CD8-positive, alpha-beta T cell (primary cell): ENCODE measurements at regions of chr19 and their contacts with region 1.

Region 1: DNA sequence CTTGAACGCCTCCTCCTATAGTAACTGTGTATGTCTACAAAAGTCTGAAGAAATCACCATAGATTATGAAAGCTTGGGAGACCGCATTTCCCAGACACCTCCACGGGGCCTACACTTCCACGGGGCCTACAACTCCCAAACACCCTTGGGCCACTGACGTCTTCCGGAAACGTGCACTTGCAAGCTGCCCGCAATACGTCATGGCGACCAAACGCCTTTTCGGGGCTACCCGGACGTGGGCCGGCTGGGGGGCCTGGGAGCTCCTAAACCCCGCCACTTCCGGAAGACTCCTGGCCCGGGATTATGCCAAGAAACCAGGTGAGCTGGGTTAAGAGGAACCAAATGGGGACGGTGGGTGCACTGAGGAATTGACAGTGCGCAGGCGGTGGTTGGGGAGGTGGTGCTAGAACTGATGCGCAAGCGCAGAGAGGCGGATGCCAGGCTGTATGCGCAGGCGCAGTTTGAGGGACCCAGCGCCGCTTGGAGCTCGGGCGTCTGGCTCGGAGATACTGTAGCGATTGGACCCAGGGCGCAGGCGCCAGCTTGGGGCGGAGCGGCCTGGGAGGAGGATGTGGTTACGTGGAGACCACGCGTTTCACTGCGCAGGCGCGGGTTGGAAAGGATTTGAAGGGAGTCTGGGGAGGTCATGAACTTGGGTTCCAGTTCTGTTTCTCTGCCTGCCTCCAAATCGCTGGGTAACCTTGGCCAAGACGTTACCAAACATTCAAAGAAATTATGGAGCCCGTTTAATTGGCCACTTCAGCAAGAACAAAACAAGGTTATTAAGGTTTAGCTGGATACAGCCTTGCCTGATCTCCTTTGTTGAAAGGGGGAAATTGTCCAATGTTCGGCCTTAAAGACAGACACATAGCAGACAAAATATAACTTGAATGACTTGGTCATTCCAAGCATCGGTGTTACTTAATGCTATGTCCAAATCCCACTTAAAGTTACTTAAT is at the start of gene MRPL54:
- DNase-seq: peak; percentile 98 to 100 (median 99)
- ATAC-seq: peak; percentile 79
- H3K4me3 ChIP-seq: peak within 1 kb of the TSS; percentile 80 to 90
- H3K4me3 Mint-ChIP-seq: peak within 1 kb of the TSS; percentile 95
- H3K27ac ChIP-seq: peak within 1 kb of the TSS; percentile 98 to 99
- H3K27ac Mint-ChIP-seq: peak within 1 kb of the TSS; percentile 100
- H3K4me1 ChIP-seq: peaks cover 46% of the 10 kb centered on the region
- H3K4me1 Mint-ChIP-seq: peaks cover 47% of the 10 kb centered on the region
- H3K27me3 ChIP-seq: no peaks in the 10 kb centered on the region
- H3K27me3 Mint-ChIP-seq: no peaks in the 10 kb centered on the region
- CTCF ChIP-seq: no peak
- total RNA-seq, gene MRPL54: 72.5 to 78.0 TPM

Region 2: DNA sequence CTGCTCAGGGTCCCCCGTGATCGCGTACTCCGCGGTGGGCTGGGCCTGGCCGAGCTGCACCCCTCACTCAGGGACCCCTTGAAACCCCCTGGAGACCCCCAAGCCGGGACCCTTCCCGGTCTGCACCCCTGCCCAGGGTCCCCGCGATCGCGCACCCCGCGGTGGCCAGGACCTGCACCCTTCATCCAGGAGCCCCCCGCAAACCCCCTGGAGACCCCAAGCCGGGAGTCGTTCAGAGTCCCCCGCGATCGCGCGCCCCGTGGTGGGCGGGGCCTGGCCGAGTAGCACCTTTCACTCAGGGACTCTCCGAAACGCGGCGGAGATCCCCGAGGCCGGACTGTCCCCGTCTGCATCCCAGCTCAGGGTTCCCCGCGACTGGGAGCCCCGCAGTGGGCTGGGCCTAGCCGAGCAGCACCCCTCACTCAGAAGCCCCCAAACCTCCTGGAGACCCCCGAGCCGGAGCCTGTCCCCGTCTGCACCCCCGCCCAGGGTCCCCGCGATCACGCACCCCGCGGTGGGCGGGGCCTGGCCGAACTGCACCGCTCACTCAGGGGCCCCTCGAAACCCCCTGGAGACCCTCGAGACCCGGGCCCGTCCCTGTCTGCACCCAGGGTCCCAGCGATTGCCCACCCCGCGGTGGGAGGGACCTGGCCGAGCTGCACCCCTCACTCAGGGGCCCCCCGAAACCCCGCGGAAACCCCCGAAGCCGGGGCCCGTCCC is 1306.8 kb before region 1 on chr19:
- CTCF ChIA-PET with region 1: no interaction called
- POLR2A ChIA-PET with region 1: no interaction called
- intact Hi-C with region 1: loop called in 1 of 2 experiments (anchors 5 kb)
- DNase-seq: peak in 7 of 9 experiments; percentile 22 to 87 (median 52)
- ATAC-seq: peak; percentile 41
- H3K4me3 ChIP-seq: peak overlapping the region; percentile 62 to 80
- H3K4me3 Mint-ChIP-seq: peak overlapping the region; percentile 83
- H3K27ac ChIP-seq: peak overlapping the region; percentile 32 to 50
- H3K27ac Mint-ChIP-seq: peak overlapping the region; percentile 75
- H3K4me1 ChIP-seq: peaks cover 14% of the 10 kb centered on the region
- H3K4me1 Mint-ChIP-seq: peaks cover 13% of the 10 kb centered on the region
- H3K27me3 ChIP-seq: no peaks in the 10 kb centered on the region
- H3K27me3 Mint-ChIP-seq: no peaks in the 10 kb centered on the region
- CTCF ChIP-seq: no peak

Region 3: DNA sequence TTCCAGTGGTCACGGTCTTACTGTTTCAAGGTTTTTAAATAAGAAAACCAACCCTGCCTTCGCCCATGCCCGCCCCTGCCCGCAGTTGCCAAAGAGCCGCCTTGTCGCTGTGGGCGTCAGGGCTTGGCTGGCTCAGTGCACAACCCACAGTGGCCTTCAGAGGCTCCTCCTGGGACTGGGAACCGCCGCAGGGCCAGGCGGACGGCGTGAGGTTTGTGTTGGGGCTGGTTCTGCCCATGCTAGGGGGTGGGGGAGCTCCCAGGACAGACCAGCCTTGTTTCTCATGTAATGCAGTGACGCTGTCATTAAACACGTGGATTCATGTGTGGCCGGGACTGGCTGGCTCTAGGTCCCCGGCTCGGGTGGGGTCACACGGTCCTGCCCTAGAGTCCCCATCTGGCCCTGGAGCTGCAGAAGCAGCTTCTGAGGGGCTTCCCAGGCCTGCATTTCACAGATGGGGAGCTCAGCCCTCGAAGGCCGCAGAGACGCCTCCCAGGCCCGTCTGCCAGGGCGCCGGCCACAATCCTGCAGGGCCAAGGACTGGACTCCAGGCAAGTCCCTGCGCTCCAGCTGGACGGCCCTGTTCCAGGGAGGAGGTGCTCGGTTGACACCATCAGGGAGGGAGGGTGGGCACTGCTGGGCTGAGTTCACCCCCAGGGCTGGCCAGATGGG is 226.2 kb before region 1 on chr19:
- CTCF ChIA-PET with region 1: no interaction called
- POLR2A ChIA-PET with region 1: no interaction called
- intact Hi-C with region 1: no loop called
- DNase-seq: no peak
- ATAC-seq: no peak
- H3K4me3 ChIP-seq: no peak overlapping the region
- H3K4me3 Mint-ChIP-seq: no peak overlapping the region
- H3K27ac ChIP-seq: no peak overlapping the region
- H3K27ac Mint-ChIP-seq: no peak overlapping the region
- H3K4me1 ChIP-seq: no peaks in the 10 kb centered on the region
- H3K4me1 Mint-ChIP-seq: no peaks in the 10 kb centered on the region
- H3K27me3 ChIP-seq: no peaks in the 10 kb centered on the region
- H3K27me3 Mint-ChIP-seq: no peaks in the 10 kb centered on the region
- CTCF ChIP-seq: no peak

Region 4: DNA sequence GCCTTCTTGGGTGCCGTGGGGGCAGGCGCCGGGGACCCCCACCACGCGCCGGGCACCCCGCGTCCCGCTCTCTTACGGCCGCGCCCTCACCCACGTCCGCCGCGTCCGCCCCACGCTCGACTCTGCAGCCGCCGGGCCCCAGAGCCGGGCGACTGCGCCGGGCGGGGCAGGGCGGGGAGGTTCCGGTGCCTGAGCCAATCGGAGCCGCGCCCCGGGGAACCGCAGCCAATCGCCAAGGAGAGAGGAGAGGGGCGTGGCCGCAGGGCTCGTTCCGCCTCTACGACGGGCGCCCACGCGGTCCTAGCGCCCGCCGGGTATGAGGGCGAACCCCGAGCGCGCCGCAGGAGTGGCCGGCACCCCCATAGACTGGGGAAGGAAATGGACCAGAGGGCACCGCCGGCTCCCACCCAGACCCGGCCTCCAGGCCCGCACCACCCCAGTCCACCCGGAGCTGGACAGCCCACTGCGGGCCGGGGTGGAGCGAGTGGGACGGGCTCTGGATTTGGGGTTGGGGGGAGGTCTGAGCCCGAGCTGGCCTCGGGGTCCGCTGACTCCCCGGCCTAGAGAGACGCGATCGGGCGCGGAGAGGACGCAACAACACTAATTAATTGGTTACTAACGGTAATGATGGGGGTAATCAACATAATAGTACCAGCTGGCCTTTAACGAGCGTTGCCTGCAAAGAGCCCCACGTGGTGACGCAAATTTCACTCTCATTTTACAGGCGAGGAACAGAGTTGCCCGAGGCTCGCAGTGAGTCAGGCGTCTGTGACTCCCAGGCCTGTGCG is 205.1 kb before region 1 on chr19 and contains the start of gene MFSD12:
- CTCF ChIA-PET with region 1: no interaction called
- POLR2A ChIA-PET with region 1: no interaction called
- intact Hi-C with region 1: loop called in 1 of 2 experiments (anchors 2 kb)
- DNase-seq: peak; percentile 88 to 97 (median 96)
- ATAC-seq: peak; percentile 85
- H3K4me3 ChIP-seq: peak within 1 kb of the TSS; percentile 68 to 95
- H3K4me3 Mint-ChIP-seq: peak within 1 kb of the TSS; percentile 96
- H3K27ac ChIP-seq: peak within 1 kb of the TSS; percentile 56 to 64
- H3K27ac Mint-ChIP-seq: peak within 1 kb of the TSS; percentile 95
- H3K4me1 ChIP-seq: peaks cover 46% of the 10 kb centered on the region
- H3K4me1 Mint-ChIP-seq: peaks cover 36% of the 10 kb centered on the region
- H3K27me3 ChIP-seq: no peaks in the 10 kb centered on the region
- H3K27me3 Mint-ChIP-seq: no peaks in the 10 kb centered on the region
- CTCF ChIP-seq: no peak
- total RNA-seq, gene MFSD12: 42.3 to 42.7 TPM

Region 5: GRCh38 chr19:3710265-3710812 is 52.4 kb before region 1 on chr19:
- CTCF ChIA-PET with region 1: no interaction called
- POLR2A ChIA-PET with region 1: no interaction called
- intact Hi-C with region 1: no loop called
- DNase-seq: peak in 1 of 9 experiments; percentile 37
- ATAC-seq: no peak
- H3K4me3 ChIP-seq: no peak overlapping the region
- H3K4me3 Mint-ChIP-seq: no peak overlapping the region
- H3K27ac ChIP-seq: no peak overlapping the region
- H3K27ac Mint-ChIP-seq: no peak overlapping the region
- H3K4me1 ChIP-seq: no peaks in the 10 kb centered on the region
- H3K4me1 Mint-ChIP-seq: peaks cover 6% of the 10 kb centered on the region
- H3K27me3 ChIP-seq: peaks cover 0 to 4% of the 10 kb centered on the region in 2 experiments
- H3K27me3 Mint-ChIP-seq: peaks cover 5% of the 10 kb centered on the region
- CTCF ChIP-seq: no peak

Region 6: DNA sequence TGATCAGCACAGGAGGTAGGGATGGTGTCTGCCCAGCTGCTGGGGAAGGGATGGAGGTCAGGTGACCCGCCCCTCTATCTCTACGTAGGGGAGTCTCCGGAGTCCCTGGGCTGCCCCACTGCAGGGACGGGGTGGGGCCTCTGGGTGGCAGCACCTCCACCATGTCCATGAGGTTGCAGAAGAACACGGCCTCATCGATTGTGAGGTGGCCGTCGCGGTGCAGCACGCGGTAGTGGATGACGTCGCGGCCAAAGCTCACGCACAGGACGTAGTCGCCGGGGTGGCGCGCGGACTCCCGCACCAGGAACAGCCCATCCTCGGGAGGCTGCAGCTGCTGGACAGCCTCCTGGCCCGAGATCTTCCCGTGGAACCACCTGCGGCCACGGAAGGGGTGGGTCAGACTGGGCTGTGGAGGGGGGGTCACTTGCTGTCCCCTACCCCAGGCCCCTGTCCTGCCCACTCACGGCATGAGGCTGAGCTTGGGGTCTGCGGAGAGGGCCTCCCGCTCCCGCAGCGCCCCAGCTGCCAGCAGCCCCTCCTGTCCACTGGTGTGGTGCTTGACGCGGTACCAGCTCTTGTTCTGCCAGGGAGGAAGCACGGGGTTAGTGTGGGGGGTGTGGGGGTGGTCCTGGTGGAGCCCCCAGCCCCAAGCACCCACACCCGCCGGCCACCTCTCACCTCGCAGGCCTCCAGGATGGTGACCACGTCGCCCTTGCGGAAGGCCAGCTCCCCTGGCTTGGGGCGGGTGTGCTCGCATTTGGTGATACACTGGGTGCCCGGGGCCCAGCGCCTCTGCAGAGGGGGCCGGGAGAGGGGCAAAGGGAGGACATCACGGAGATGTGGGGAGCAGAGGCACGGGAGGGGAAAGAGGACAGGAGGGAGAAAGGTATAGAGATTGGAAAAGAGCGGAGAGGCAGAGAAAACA is 21.1 kb after region 1 on chr19:
- CTCF ChIA-PET with region 1: interaction called, 4 read pairs
- POLR2A ChIA-PET with region 1: interaction called, 4 read pairs
- intact Hi-C with region 1: loop called in 1 of 2 experiments (anchors 2 kb)
- DNase-seq: peak in 8 of 9 experiments; percentile 25 to 75 (median 64)
- ATAC-seq: peak; percentile 58
- H3K4me3 ChIP-seq: peak overlapping the region in 1 of 2 experiments; percentile 69
- H3K4me3 Mint-ChIP-seq: peak overlapping the region; percentile 83
- H3K27ac ChIP-seq: peak overlapping the region in 1 of 2 experiments; percentile 48
- H3K27ac Mint-ChIP-seq: peak overlapping the region; percentile 79
- H3K4me1 ChIP-seq: peaks cover 15% of the 10 kb centered on the region
- H3K4me1 Mint-ChIP-seq: peaks cover 22% of the 10 kb centered on the region
- H3K27me3 ChIP-seq: no peaks in the 10 kb centered on the region
- H3K27me3 Mint-ChIP-seq: no peaks in the 10 kb centered on the region
- CTCF ChIP-seq: peak; percentile 50

Region 7: GRCh38 chr19:3914199-3914598 is 151.4 kb after region 1 on chr19:
- CTCF ChIA-PET with region 1: no interaction called
- POLR2A ChIA-PET with region 1: no interaction called
- intact Hi-C with region 1: no loop called
- DNase-seq: no peak
- ATAC-seq: no peak
- H3K4me3 ChIP-seq: no peak overlapping the region
- H3K4me3 Mint-ChIP-seq: no peak overlapping the region
- H3K27ac ChIP-seq: no peak overlapping the region
- H3K27ac Mint-ChIP-seq: no peak overlapping the region
- H3K4me1 ChIP-seq: no peaks in the 10 kb centered on the region
- H3K4me1 Mint-ChIP-seq: no peaks in the 10 kb centered on the region
- H3K27me3 ChIP-seq: peaks cover 0 to 2% of the 10 kb centered on the region in 2 experiments
- H3K27me3 Mint-ChIP-seq: peaks cover 7% of the 10 kb centered on the region
- CTCF ChIP-seq: no peak

Region 8: GRCh38 chr19:3984908-3985642 is 222.3 kb after region 1 on chr19 and contains the start of gene EEF2:
- CTCF ChIA-PET with region 1: interaction called, 3 read pairs
- POLR2A ChIA-PET with region 1: interaction called, 14 read pairs
- intact Hi-C with region 1: loop called (anchors 1 to 5 kb)
- DNase-seq: peak; percentile 82 to 96 (median 90)
- ATAC-seq: peak; percentile 54
- H3K4me3 ChIP-seq: peak within 1 kb of the TSS; percentile 70 to 78
- H3K4me3 Mint-ChIP-seq: peak within 1 kb of the TSS; percentile 92
- H3K27ac ChIP-seq: peak within 1 kb of the TSS; percentile 83 to 85
- H3K27ac Mint-ChIP-seq: peak within 1 kb of the TSS; percentile 97
- H3K4me1 ChIP-seq: peaks cover 52% of the 10 kb centered on the region
- H3K4me1 Mint-ChIP-seq: peaks cover 57% of the 10 kb centered on the region
- H3K27me3 ChIP-seq: no peaks in the 10 kb centered on the region
- H3K27me3 Mint-ChIP-seq: no peaks in the 10 kb centered on the region
- CTCF ChIP-seq: no peak
- total RNA-seq, gene EEF2: 2,844 to 2,933 TPM

Region 9: DNA sequence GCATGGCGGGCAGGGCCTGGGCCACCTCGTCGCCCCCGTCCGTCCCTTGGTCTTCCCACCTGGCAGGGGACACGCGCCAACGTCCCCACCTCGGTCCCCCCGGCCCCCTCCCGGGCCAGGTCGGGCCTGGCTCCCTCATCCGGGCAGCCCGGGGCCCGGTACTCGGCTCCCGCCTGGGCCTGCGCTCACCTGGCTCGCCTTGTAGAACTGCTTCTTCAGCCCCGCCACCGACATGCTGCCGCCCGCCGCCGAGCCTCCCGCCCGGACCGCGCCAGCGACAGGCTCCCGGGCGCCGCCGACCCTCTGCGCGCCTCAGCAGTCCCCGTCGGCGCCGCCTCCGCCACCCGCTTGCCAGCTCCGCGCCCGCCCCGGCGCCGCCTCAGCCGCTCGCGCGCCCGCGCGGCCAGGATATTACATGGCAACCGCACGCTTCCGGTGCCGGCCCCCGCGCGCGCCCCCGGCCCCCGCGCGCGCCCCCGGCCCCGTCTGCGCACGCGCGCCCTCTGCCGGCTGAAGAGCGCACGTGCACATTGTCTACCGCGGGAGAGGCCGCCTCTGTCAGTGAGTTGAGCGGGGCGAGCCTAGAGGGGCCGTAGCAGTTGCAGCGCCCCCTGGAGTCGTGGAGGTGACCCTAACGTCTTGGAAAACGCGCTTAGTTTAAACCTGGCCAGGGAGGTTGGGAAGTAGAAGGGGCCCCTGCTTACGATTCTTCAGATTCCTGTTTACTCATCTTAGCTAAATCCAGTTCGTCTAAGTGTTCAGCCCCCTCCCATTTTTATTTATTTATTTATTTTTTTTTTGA is 637.6 kb after region 1 on chr19 and contains the start of gene SH3GL1:
- CTCF ChIA-PET with region 1: no interaction called
- POLR2A ChIA-PET with region 1: no interaction called
- intact Hi-C with region 1: loop called (anchors 2 to 5 kb)
- DNase-seq: peak; percentile 80 to 97 (median 94)
- ATAC-seq: peak; percentile 66
- H3K4me3 ChIP-seq: peak within 1 kb of the TSS; percentile 83 to 92
- H3K4me3 Mint-ChIP-seq: peak within 1 kb of the TSS; percentile 91
- H3K27ac ChIP-seq: peak within 1 kb of the TSS; percentile 77 to 97
- H3K27ac Mint-ChIP-seq: peak within 1 kb of the TSS; percentile 98
- H3K4me1 ChIP-seq: peaks cover 44% of the 10 kb centered on the region
- H3K4me1 Mint-ChIP-seq: peaks cover 55% of the 10 kb centered on the region
- H3K27me3 ChIP-seq: no peaks in the 10 kb centered on the region
- H3K27me3 Mint-ChIP-seq: no peaks in the 10 kb centered on the region
- CTCF ChIP-seq: peak; percentile 71
- total RNA-seq, gene SH3GL1: 35.0 to 38.1 TPM